ENCODE measurements at regions of chr22 and their contacts with region 1.

Region 1: GRCh38 chr22:38753948-38754750 is 1.6 kb downstream of the SUN2 start:
- DNase-seq: peak in 27 of 42 donors; percentile 44 to 88 (median 65)

Region 2: GRCh38 chr22:38694945-38695344 is 59.2 kb before region 1 on chr22:
- intact Hi-C with region 1: no loop called
- DNase-seq: no peak

Region 3: GRCh38 chr22:38705235-38706100 is 48.7 kb before region 1 on chr22 and contains the start of gene GTPBP1:
- intact Hi-C with region 1: loop called (anchors 5 kb)
- DNase-seq: peak; percentile 95 to 100 (median 99)

Measured in head of caudate nucleus (tissue), 42 donors.